GM12878 (cell line): ENCODE measurements at regions of chr12 and their contacts with region 1.

Region 1: DNA sequence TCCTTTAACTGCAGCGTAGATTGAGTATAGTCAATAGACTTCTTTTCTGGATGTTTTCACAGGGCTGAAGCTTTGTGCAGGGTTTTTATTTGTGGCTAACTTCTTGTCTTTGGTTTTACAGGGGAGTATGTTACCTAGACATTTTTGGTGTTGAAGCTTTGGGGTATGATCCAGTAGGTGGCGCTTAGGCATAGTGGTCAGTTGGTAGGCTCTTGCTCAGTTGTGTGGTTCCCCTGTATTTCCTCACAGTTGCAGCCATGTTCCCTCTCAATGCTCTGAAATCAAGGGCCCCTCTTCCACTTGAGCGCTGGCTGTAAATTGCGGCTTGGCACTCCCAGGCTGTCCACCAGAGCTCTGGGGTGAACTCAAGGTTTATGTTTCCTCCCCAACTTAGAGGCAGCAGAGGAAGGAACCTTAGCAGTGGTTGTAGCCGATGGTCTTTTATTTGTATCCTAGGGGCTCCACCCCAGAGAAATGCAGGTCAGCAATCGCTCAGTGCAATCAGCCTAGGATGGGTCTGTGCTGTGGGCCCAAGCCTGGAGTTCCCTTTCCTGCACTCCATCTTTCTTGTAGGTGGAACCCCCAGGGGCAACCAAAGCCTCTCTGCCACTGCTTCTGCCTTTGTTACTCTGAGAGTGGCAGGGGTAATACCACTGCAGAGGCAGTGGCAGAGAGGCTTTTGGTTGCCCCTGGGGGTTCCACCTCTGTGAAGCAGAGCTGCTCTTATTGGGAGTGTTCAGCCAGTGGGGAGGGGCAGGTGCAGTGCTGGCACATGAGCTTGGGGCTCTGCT is 55.1 kb downstream of the CMAS start:
- DNase-seq: peak; percentile 13
- ATAC-seq: peak; percentile 86
- H3K4me3 ChIP-seq: no peak overlapping the region
- H3K27ac ChIP-seq: no peak overlapping the region
- H3K4me1 ChIP-seq: peaks cover 2% of the 10 kb centered on the region; the same call in 1 of the 2 replicates
- H3K27me3 ChIP-seq: no peaks in the 10 kb centered on the region
- CTCF ChIP-seq: peak; percentile 49 to 58 (median 56); a peak in 5 of 6 replicates
- EP300 ChIP-seq: no peak
- POLR2A ChIP-seq: no peak
- RAD21 ChIP-seq: peak; percentile 63

Region 2: GRCh38 chr12:21993438-21993981 is 107.6 kb before region 1 on chr12:
- CTCF ChIA-PET with region 1: no interaction called
- POLR2A ChIA-PET with region 1: no interaction called
- RAD21 ChIA-PET with region 1: no interaction called
- SMC1A ChIA-PET with region 1: no interaction called
- in situ Hi-C with region 1: no loop called
- intact Hi-C with region 1: no loop called
- DNase-seq: no peak
- ATAC-seq: no peak
- H3K4me3 ChIP-seq: no peak overlapping the region
- H3K27ac ChIP-seq: no peak overlapping the region
- H3K4me1 ChIP-seq: no peaks in the 10 kb centered on the region
- H3K27me3 ChIP-seq: no peaks in the 10 kb centered on the region
- CTCF ChIP-seq: no peak
- EP300 ChIP-seq: no peak
- POLR2A ChIP-seq: no peak
- RAD21 ChIP-seq: no peak

Region 3: GRCh38 chr12:22334410-22335290 is 233.5 kb after region 1 on chr12 and contains the start of gene ST8SIA1:
- CTCF ChIA-PET with region 1: interaction called, 4 read pairs
- POLR2A ChIA-PET with region 1: no interaction called
- RAD21 ChIA-PET with region 1: no interaction called
- SMC1A ChIA-PET with region 1: no interaction called
- in situ Hi-C with region 1: no loop called
- intact Hi-C with region 1: loop called (anchors 1 kb)
- DNase-seq: no peak
- ATAC-seq: peak; percentile 45
- H3K4me3 ChIP-seq: peak within 1 kb of the TSS; percentile 41; the same call in 1 of the 2 replicates
- H3K27ac ChIP-seq: no peak within 1 kb of the TSS
- H3K4me1 ChIP-seq: no peaks in the 10 kb centered on the region; the same call in 1 of the 2 replicates
- H3K27me3 ChIP-seq: peaks cover 3 to 22% of the 10 kb centered on the region in 2 experiments
- CTCF ChIP-seq: no peak
- EP300 ChIP-seq: no peak
- POLR2A ChIP-seq: no peak
- RAD21 ChIP-seq: no peak
- polyA plus RNA-seq, gene ST8SIA1: not detected

Region 4: DNA sequence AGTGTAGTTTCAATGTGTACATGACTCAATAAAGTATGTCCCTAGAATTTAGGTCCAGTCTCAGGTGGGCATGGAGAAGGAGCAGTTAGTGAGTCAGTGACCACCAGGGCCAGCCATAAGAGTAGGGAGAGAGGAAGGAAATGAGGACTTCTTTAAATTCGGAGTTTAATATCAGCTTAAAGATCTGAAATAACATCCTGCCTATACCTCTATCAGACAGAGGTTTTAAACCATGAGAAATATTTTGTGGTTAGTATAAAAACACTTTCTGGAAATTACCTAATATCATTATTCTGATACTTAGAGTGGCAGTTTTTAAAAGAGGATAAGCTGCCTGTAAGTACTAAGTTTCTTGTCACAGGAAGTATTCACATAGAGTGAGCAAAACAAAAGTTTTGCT is 295.1 kb after region 1 on chr12:
- CTCF ChIA-PET with region 1: no interaction called
- POLR2A ChIA-PET with region 1: no interaction called
- RAD21 ChIA-PET with region 1: no interaction called
- SMC1A ChIA-PET with region 1: no interaction called
- in situ Hi-C with region 1: no loop called
- intact Hi-C with region 1: no loop called
- DNase-seq: no peak
- ATAC-seq: peak; percentile 61
- H3K4me3 ChIP-seq: no peak overlapping the region
- H3K27ac ChIP-seq: peak overlapping the region; percentile 38; the same call in 1 of the 2 replicates
- H3K4me1 ChIP-seq: no peaks in the 10 kb centered on the region
- H3K27me3 ChIP-seq: no peaks in the 10 kb centered on the region
- CTCF ChIP-seq: no peak
- EP300 ChIP-seq: no peak
- POLR2A ChIP-seq: no peak
- RAD21 ChIP-seq: no peak